ENCODE measurements at regions of chr17 and their contacts with region 1.

Region 1: DNA sequence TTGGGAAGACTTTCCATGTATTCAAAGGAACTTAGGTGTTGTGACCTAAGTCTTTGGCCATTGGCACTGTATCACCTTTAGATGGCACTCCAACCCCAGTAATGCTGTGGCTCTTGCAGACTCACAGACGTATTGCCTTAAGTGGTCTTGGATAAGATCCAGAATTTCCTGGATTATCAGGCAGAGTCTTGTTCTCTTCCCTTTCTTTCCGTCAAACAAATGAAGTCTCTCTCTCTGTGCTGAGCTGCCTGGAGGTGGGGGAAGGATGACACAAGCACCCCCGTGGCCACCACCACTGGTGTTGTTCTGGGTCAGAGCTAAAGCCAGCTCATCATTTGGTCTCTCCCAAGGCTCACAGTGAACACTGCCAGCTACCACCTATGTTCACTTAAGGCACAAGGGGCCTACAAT is 789.9 kb upstream of the KIF2B start:
- DNase-seq: peak; percentile 50
- H3K4me3 ChIP-seq: no peak overlapping the region
- H3K27ac ChIP-seq: no peak overlapping the region
- H3K4me1 ChIP-seq: no peaks in the 10 kb centered on the region
- H3K27me3 ChIP-seq: no peaks in the 10 kb centered on the region
- CTCF ChIP-seq: peak; percentile 52 to 69

Region 2: GRCh38 chr17:53150101-53150698 is 117.3 kb after region 1 on chr17:
- CTCF ChIA-PET with region 1: no interaction called
- dilution Hi-C with region 1: no loop called
- in situ Hi-C with region 1: no loop called
- intact Hi-C with region 1: loop called (anchors 1 kb)
- DNase-seq: no peak
- H3K4me3 ChIP-seq: no peak overlapping the region
- H3K27ac ChIP-seq: no peak overlapping the region
- H3K4me1 ChIP-seq: no peaks in the 10 kb centered on the region
- H3K27me3 ChIP-seq: no peaks in the 10 kb centered on the region
- CTCF ChIP-seq: peak in 1 of 2 donors; percentile 24

Region 3: GRCh38 chr17:53570731-53571130 is 537.9 kb after region 1 on chr17:
- CTCF ChIA-PET with region 1: interaction called, 3 read pairs
- dilution Hi-C with region 1: no loop called
- in situ Hi-C with region 1: no loop called
- intact Hi-C with region 1: loop called (anchors 2 kb)
- DNase-seq: no peak
- H3K4me3 ChIP-seq: peak overlapping the region in 1 of 3 experiments; percentile 36
- H3K27ac ChIP-seq: no peak overlapping the region
- H3K4me1 ChIP-seq: no peaks in the 10 kb centered on the region
- H3K27me3 ChIP-seq: no peaks in the 10 kb centered on the region
- CTCF ChIP-seq: no peak

Region 4: GRCh38 chr17:53837131-53837530 is 804.3 kb after region 1 on chr17:
- CTCF ChIA-PET with region 1: no interaction called
- dilution Hi-C with region 1: no loop called
- in situ Hi-C with region 1: no loop called
- intact Hi-C with region 1: loop called (anchors 5 kb)
- DNase-seq: no peak
- H3K4me3 ChIP-seq: no peak overlapping the region
- H3K27ac ChIP-seq: no peak overlapping the region
- H3K4me1 ChIP-seq: no peaks in the 10 kb centered on the region
- H3K27me3 ChIP-seq: no peaks in the 10 kb centered on the region
- CTCF ChIP-seq: no peak

Region 5: GRCh38 chr17:54426296-54426886 is 1393.5 kb after region 1 on chr17:
- CTCF ChIA-PET with region 1: no interaction called
- dilution Hi-C with region 1: no loop called
- in situ Hi-C with region 1: loop called in 1 of 2 experiments (anchors 25 kb)
- intact Hi-C with region 1: loop called (anchors 5 kb)
- DNase-seq: peak; percentile 46
- H3K4me3 ChIP-seq: no peak overlapping the region
- H3K27ac ChIP-seq: no peak overlapping the region
- H3K4me1 ChIP-seq: no peaks in the 10 kb centered on the region
- H3K27me3 ChIP-seq: no peaks in the 10 kb centered on the region
- CTCF ChIP-seq: peak; percentile 82 to 83

Measured in mammary epithelial cell (primary cell).